ENCODE measurements at regions of chr3 and their contacts with region 1.

Region 1: DNA sequence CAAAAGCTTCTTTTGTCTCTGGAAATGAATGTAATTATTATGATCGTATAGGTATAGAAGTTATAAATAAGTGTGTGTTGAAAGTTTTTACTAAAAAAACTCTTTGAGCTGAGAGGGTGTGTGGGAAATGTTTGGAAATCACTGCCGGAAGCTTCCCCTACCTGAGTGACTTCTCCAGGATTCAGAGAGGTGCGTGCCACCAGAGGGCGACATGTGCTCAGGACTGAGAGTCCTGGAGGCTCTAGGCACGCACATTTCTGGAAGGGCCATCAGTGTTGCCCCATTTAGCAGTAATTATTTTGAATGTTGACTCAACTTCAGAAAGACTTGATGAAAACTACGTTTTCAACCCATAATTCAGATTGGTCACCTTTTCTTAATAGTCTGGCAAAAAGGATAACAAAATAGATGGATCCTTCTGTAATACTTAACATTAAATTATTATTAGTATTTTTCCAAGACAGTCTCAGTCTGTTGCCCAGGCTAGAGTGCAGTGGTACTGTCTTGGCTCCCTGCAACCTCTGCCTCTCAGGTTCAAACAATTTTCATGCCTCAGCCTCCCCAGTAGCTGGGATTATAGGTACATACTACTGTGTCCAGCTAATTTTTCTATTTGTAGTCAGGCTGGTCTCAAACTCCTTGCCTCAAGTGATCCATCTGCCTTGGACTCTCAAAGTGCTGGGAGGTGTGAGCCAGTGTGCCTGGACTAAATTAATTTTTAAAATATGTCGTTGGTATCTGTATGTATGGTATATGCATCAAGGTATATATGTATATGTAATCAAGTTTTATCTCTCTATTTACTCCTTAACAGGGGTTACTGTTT is 34.5 kb downstream of the GPR171 start:
- DNase-seq: peak; percentile 58 to 86 (median 74)
- H3K4me3 ChIP-seq: no peak overlapping the region
- H3K4me3 Mint-ChIP-seq: no peak overlapping the region
- H3K27ac ChIP-seq: no peak overlapping the region
- H3K27ac Mint-ChIP-seq: peak overlapping the region in 5 of 8 donors; percentile 15 to 55 (median 47)
- H3K4me1 ChIP-seq: peaks cover 30% of the 10 kb centered on the region
- H3K4me1 Mint-ChIP-seq: peaks cover 32 to 43% (median 41%) of the 10 kb centered on the region in 3 donors
- H3K27me3 ChIP-seq: no peaks in the 10 kb centered on the region
- H3K27me3 Mint-ChIP-seq: peaks cover 0 to 2% of the 10 kb centered on the region in 2 donors

Region 2: GRCh38 chr3:151152455-151153079 is 15.9 kb before region 1 on chr3:
- CTCF ChIA-PET with region 1: interaction called, 10 read pairs
- POLR2A ChIA-PET with region 1: no interaction called
- DNase-seq: no peak
- H3K4me3 ChIP-seq: no peak overlapping the region
- H3K4me3 Mint-ChIP-seq: no peak overlapping the region
- H3K27ac ChIP-seq: no peak overlapping the region
- H3K27ac Mint-ChIP-seq: no peak overlapping the region
- H3K4me1 ChIP-seq: no peaks in the 10 kb centered on the region
- H3K4me1 Mint-ChIP-seq: peaks cover 0 to 4% (median 0%) of the 10 kb centered on the region in 3 donors
- H3K27me3 ChIP-seq: no peaks in the 10 kb centered on the region
- H3K27me3 Mint-ChIP-seq: peaks cover 1 to 34% of the 10 kb centered on the region in 2 donors

Region 3: GRCh38 chr3:151203051-151203420 is 34.6 kb after region 1 on chr3 and contains the start of gene GPR171:
- CTCF ChIA-PET with region 1: interaction called, 54 read pairs
- POLR2A ChIA-PET with region 1: no interaction called
- DNase-seq: peak; percentile 46 to 86 (median 82)
- H3K4me3 ChIP-seq: peak within 1 kb of the TSS; percentile 54
- H3K4me3 Mint-ChIP-seq: peak within 1 kb of the TSS; percentile 78 to 97 (median 88)
- H3K27ac ChIP-seq: peak within 1 kb of the TSS; percentile 62
- H3K27ac Mint-ChIP-seq: peak within 1 kb of the TSS; percentile 91 to 97 (median 94)
- H3K4me1 ChIP-seq: peaks cover 71% of the 10 kb centered on the region
- H3K4me1 Mint-ChIP-seq: peaks cover 65 to 84% (median 76%) of the 10 kb centered on the region in 3 donors
- H3K27me3 ChIP-seq: no peaks in the 10 kb centered on the region
- H3K27me3 Mint-ChIP-seq: no peaks in the 10 kb centered on the region
- total RNA-seq, gene GPR171: 179 to 188 TPM

Region 4: DNA sequence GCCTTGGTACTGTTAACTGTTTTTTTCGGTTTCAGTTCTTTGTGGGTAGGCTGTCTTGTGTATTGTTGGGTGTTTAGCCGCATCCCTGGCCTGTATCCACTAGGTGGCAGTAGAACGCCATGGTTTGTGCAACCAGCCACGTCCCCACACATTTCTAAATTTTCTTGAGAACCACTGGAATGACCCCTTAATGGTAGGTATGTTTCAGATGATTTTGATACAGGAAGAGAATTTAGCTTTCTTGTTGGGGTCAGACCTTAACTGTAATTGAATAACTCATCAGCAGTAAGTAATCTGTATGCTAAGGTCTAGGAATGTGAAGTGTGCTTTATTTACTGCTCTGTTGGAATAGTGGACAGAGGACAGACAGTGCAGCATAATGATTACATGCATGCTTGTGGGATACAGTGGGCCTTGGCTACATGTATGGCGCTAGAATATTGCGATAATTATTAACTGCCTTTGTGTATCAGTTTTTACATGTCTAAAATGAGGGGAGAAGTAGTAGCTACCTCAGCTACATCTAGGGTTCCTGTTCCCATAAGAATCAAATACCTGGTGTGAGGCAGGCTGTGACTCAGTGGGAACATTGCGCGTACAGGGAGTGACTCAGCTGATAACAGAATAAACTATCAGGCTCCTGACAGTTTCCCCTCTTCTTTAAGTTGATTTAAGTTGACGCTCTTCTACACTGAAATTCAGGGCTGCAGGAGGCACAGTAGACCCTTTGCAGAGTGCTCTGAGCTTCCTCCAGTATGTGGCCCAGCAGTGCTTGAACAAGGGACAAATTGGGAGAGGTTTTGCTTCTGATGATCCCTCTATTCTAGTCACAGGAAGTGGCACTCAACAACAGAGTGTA is 59.6 kb after region 1 on chr3:
- CTCF ChIA-PET with region 1: interaction called, 53 read pairs
- POLR2A ChIA-PET with region 1: no interaction called
- DNase-seq: peak; percentile 61 to 82 (median 71)
- H3K4me3 ChIP-seq: no peak overlapping the region
- H3K4me3 Mint-ChIP-seq: peak overlapping the region in 4 of 7 donors; percentile 10 to 68 (median 36)
- H3K27ac ChIP-seq: no peak overlapping the region
- H3K27ac Mint-ChIP-seq: peak overlapping the region in 7 of 8 donors; percentile 48 to 98 (median 77)
- H3K4me1 ChIP-seq: peaks cover 34% of the 10 kb centered on the region
- H3K4me1 Mint-ChIP-seq: peaks cover 46 to 66% (median 46%) of the 10 kb centered on the region in 3 donors
- H3K27me3 ChIP-seq: no peaks in the 10 kb centered on the region
- H3K27me3 Mint-ChIP-seq: peaks cover 0 to 2% of the 10 kb centered on the region in 2 donors

Region 5: GRCh38 chr3:151282921-151283320 is 114.4 kb after region 1 on chr3:
- CTCF ChIA-PET with region 1: interaction called, 83 read pairs
- POLR2A ChIA-PET with region 1: no interaction called
- DNase-seq: peak in 2 of 5 donors; percentile 57 to 63
- H3K4me3 ChIP-seq: no peak overlapping the region
- H3K4me3 Mint-ChIP-seq: peak overlapping the region in 1 of 7 donors; percentile 22
- H3K27ac ChIP-seq: no peak overlapping the region
- H3K27ac Mint-ChIP-seq: peak overlapping the region in 4 of 8 donors; percentile 20 to 75 (median 63)
- H3K4me1 ChIP-seq: peaks cover 12% of the 10 kb centered on the region
- H3K4me1 Mint-ChIP-seq: peaks cover 13 to 33% (median 27%) of the 10 kb centered on the region in 3 donors
- H3K27me3 ChIP-seq: no peaks in the 10 kb centered on the region
- H3K27me3 Mint-ChIP-seq: no peaks in the 10 kb centered on the region

Measured in CD8-positive, alpha-beta memory T cell (primary cell).